Activated CD4-positive, alpha-beta memory T cell treated with anti-CD3 and anti-CD28 coated beads for 36 hours (primary cell): ENCODE measurements at regions of chr11 and their contacts with region 1.

Region 1: GRCh38 chr11:111521132-111521531 is 6.6 kb downstream of the HOATZ start:
- DNase-seq: no peak
- H3K4me3 Mint-ChIP-seq: no peak overlapping the region
- H3K27ac Mint-ChIP-seq: no peak overlapping the region
- H3K4me1 Mint-ChIP-seq: peaks cover 14% of the 10 kb centered on the region
- H3K27me3 Mint-ChIP-seq: peaks cover 13% of the 10 kb centered on the region

Region 2: DNA sequence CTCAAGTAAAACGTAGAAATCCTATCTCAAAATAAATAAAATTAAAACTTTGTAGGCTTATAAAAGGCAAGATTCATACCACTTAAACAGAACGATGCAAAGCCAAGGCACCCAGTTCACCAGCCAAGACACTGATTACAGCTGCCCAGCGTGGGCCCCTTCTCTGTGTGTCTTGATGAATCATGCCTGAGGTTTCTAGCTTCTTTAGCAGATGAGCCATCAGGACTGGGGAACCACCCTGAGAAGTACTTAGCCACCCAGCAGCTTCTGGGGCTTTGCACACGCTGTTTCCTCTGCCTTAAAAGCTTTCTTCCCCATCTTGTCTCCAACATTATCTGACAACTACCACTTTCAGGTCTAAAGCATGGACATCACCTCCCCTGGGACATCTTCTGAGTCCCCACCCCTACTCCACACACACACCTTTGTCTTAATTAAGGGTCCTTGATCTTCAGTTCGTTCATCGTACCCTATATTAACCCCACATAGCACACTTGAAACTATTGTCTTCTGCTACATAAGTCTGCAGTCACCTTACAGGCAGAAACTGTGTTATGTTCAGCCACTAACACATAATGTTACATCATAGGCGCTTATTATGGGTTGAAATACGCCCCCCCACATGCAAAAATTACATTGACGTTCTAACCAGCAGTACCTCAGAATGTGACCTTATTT is 10.7 kb after region 1 on chr11:
- CTCF ChIA-PET with region 1: no interaction called
- POLR2A ChIA-PET with region 1: no interaction called
- intact Hi-C with region 1: loop called (anchors 1 kb)
- DNase-seq: peak; percentile 85
- H3K4me3 Mint-ChIP-seq: no peak overlapping the region
- H3K27ac Mint-ChIP-seq: no peak overlapping the region
- H3K4me1 Mint-ChIP-seq: peaks cover 26% of the 10 kb centered on the region
- H3K27me3 Mint-ChIP-seq: peaks cover 25% of the 10 kb centered on the region

Region 3: DNA sequence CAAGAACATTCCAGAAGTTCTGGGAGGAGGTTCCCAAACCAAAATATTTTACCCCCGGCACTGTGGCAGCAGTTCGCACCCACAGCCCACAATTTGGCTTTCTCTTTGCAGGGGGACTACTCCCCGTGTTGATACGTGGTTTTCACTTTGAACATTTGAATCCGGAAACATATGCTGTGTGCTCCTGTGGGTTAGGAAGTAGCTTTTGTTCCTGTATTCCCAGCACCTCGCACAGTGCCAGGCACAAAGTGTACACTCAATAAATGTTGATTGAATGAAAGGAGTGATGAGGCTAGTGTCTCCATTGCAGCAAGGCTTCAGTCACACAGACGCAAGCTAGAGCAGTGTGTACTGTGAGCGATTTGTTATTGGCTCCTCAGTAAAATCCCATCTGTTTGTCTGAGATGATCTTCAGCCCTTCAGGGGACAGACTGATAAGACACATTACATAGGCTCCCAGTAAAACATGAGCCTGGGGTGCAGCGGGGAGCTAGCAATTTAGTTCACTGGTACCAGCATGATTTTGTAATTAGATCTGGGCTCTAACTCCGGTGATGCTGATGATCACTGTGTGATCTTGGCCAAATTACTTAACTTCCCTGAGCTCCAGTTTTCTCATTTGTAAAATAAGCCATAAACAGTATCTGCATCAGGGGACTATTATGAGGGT is 21.6 kb after region 1 on chr11:
- CTCF ChIA-PET with region 1: no interaction called
- POLR2A ChIA-PET with region 1: no interaction called
- intact Hi-C with region 1: no loop called
- DNase-seq: no peak
- H3K4me3 Mint-ChIP-seq: no peak overlapping the region
- H3K27ac Mint-ChIP-seq: no peak overlapping the region
- H3K4me1 Mint-ChIP-seq: peaks cover 5% of the 10 kb centered on the region
- H3K27me3 Mint-ChIP-seq: peaks cover 63% of the 10 kb centered on the region

Region 4: DNA sequence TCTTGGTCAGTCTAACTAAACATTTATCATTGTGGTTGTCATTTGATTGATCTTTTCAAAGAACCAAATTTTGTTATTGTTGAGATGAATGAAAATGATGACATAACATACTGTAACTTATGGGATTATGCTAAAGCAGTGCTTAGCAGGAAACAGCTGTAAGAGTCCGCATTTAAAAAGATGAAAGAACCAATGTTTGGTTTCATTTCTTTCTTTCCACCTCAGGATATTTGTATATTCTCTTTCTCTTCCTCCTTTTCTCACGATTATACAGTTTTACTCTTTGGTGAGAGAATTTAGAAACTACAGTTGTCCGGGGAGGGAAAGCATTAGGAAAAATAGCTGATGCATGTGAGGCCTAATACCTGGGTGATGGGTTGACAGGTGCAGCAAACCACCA is 529.6 kb after region 1 on chr11:
- CTCF ChIA-PET with region 1: no interaction called
- POLR2A ChIA-PET with region 1: no interaction called
- intact Hi-C with region 1: no loop called
- DNase-seq: no peak
- H3K4me3 Mint-ChIP-seq: no peak overlapping the region
- H3K27ac Mint-ChIP-seq: no peak overlapping the region
- H3K4me1 Mint-ChIP-seq: peaks cover 18% of the 10 kb centered on the region
- H3K27me3 Mint-ChIP-seq: no peaks in the 10 kb centered on the region